Sciatic nerve (tissue), 2 donors: ENCODE measurements at regions of chr17 and their contacts with region 1.

Region 1: GRCh38 chr17:82153745-82154375 is 55.8 kb upstream of the FASN start:
- DNase-seq: peak; percentile 90
- ATAC-seq: peak; percentile 94

Region 2: GRCh38 chr17:81959362-81960129 is 194.3 kb before region 1 on chr17:
- intact Hi-C with region 1: loop called (anchors 5 kb)
- DNase-seq: peak; percentile 85
- ATAC-seq: peak; percentile 78

Region 3: DNA sequence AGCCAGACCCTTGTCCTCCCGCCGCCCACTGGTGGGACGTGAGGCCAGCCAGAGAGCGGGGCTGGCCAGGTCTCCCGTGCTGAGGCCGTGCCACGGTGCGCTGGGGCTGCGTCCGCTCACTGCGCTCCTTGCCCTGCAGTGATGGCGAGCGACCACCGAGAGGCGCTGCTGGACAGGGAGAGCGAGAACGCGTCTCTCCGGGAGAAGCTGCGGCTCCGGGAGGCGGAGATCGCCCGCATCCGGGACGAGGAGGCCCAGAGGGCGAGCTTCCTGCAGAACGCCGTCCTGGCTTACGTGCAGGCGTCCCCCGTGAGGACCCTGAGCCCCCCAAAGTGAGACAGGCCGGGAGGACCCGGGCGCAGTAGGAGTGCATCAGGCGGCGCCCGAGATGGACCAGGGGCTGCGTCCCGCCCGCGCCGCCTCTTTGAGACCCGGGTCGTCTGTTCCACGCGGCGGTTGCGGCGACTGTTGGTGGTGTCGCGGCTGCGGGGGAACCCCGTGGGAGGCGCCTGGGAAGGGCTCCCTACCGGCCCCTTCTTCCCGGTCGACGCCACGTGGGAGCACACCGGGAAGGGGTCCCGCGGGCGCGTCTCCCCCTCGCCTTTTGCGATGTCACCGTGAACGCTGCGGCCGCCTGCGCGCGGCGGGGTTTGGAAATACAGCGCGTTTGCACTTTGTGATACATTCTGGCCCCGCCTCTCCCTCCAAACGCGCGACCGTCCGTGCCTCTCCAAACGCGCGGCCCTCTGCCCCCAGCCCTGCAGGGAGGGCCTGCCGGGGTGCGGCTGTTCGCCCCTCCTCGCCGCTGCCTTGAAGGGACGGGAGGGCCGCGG is 123.2 kb before region 1 on chr17:
- intact Hi-C with region 1: loop called (anchors 2 kb)
- DNase-seq: peak; percentile 92
- ATAC-seq: peak; percentile 80

Region 4: DNA sequence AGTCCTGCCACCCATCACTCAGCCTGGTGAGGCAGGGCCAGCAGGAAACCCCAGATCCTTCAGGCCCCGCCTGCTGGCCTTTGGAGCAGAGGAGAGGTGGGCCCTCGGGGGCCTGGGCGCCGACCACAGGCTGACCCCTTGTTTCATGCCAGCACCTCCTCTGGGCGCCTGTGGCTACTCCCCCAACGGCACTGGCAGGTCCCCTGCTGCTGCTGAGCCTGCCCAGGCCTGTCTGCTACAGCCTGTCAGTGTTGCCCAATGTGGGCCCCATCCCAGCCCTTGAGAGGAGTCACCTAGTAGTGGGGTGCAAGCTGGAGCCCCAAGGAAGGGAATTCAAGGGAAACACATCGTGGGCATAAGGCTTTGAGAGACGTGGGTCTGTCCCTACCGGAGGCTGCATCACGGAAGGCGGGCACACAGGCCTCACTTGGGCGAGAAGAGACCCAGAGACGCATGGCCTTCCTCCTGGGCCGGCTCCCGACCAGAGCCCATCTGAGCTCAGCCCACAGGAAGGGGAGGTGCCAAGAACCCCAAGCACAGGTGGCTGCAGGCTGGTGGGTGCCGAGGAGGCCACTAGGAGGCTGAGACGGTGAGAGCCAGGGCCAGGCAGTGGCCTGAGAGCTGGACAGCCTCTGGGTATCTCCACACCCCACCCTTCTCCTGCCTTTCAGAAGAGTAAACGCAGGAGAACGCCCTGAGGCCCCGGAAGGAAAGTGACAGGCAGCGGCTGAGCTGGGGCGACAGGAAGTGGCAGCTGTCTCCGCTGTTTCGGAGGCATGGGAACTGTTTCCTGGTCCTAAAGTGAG is 47.8 kb before region 1 on chr17:
- intact Hi-C with region 1: loop called (anchors 10 kb)
- DNase-seq: peak; percentile 61
- ATAC-seq: peak; percentile 0

Region 5: DNA sequence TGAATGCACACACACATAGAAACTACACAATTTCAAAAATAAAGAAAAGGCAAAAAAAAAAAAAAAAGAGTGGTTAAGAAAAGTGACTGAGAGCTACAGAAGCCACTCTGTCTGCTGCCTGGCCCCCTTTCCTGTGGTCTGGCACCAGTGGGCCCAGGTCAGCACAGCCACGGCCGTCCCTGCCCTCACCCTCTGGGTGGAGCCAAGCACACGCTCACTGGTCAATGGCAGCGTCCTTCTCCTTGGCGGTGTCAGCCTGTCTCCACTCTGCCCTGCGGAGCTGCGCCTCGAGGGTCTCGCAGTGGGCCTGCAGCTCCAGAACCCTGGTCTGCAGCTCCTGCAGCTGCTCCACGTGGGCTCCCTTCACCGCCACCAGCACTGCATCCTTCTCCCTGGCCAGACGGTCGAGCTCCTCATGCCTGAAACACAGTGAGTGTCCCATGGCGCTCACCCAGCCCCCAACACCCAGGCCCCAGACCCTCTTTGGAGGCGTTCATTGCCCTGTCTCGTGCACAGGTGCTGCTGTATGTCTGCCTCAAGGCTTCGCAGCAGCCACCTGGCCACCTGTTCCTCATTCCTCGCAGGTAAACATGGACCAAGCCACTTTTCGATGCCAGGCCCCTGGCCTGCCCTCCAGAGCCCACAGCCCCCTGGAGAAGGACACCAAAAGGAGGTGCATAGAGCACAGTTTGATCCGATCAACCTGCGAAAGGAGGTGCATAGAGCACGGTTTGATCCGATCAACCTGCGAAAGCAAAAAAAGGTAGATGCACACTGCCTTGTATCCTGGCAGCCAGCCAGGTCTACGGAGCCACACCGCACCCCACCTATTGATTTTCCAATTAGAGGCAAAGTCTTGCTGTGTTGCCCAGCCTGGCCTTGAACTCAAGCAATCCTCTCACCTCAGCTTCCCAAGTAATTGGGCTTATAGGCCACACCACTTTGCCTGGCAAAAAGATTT is 34.4 kb after region 1 on chr17:
- intact Hi-C with region 1: no loop called
- DNase-seq: no peak
- ATAC-seq: peak; percentile 28

Region 6: DNA sequence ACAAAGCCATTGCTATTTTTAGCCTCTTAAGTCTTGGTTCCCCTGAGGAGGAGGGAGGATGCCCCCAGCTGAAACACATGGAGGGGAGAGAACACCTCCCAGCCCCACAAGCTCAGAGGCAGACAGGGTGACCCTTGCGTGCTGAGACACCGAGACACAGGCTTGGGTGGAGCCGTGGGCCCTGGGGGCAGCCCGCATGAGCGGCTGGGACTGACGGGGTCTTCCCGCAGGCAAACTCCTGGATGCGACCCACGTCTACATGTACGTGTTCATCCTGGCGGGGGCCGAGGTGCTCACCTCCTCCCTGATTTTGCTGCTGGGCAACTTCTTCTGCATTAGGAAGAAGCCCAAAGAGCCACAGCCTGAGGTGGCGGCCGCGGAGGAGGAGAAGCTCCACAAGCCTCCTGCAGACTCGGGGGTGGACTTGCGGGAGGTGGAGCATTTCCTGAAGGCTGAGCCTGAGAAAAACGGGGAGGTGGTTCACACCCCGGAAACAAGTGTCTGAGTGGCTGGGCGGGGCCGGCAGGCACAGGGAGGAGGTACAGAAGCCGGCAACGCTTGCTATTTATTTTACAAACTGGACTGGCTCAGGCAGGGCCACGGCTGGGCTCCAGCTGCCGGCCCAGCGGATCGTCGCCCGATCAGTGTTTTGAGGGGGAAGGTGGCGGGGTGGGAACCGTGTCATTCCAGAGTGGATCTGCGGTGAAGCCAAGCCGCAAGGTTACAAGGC is 84.8 kb after region 1 on chr17:
- intact Hi-C with region 1: no loop called
- DNase-seq: peak; percentile 78
- ATAC-seq: peak; percentile 15

Region 7: DNA sequence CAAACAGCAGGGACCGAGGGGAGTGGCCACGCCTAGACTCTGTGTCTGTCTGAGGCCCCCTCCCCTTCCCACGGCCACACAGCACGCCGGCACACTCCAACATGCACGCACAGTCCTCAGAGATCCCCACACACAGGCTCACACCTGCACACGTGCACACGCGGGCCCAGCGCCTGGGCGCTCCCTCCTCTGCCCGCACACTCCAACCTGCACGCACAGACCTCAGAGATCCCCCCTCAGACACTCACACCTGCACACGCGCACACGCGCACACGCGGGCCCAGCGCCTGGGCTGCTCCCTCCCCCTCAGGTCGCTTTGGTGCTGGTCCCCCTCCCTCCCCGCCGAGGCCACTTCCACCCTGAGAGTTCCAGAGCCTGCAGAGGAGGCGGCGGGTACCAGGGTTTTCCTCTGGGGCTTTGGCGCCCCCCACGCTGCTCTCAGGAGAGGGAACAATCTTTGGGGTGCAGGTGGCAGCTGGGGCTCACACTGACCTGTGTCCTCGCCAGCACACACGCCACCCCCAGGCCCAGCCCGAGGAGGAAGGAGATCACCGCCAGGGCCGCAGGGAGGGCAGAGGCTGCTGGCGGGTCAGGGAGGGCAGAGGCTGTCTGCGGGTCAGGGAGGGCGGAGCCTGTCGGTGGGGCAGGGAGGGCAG is 162.0 kb after region 1 on chr17:
- intact Hi-C with region 1: no loop called
- DNase-seq: no peak
- ATAC-seq: peak; percentile 30